A673 (cell line): ENCODE measurements at regions of chr16 and their contacts with region 1.

Region 1: GRCh38 chr16:1054660-1055556 is 17.6 kb upstream of the SSTR5 start:
- DNase-seq: peak; percentile 50
- H3K4me3 ChIP-seq: no peak overlapping the region
- H3K27ac ChIP-seq: no peak overlapping the region
- H3K4me1 ChIP-seq: no peaks in the 10 kb centered on the region
- H3K27me3 ChIP-seq: no peaks in the 10 kb centered on the region
- CTCF ChIP-seq: peak; percentile 90

Region 2: DNA sequence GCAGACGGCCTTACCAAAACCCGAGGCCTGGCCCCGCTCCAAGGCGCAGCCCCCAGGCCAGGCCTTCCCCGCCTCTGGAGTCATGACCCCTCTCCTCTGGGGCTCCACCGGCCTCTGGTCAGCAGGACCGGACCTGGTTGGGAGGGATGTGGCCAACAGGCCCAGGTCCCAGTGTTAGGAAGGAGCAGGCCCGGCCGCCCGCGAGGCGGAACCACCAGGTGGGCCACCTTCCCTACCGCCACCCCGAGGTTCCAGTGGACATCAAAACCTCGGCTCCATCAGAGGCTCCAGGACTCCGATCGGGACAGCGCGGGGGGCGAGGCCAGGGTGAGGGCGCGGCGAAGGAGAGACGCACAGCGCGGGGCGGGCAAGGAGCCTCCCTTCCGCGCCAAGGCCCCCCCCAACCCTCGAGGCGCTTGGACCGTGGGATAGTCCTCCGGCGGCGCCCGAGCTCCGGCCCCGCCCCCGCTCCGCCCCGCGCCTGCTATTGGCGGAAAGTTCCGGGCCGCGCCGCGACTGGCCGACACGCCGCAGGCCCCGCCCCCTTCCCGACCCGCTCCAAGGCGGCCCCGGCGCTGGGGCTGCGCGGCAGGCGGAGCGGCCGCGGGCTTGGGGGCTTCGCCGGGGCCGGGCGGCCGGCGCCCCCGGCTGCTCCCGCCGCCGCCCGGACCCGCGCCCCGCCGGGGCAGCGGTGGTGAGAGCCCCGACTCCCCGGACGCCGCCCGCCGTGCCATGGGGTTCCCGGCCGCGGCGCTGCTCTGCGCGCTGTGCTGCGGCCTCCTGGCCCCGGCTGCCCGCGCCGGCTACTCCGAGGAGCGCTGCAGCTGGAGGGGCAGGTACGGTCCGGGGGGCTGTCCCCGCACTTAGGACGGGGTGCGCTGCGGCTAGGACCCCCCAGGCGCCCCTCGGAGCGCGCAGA is 340.1 kb before region 1 on chr16 and contains the start of gene METRN:
- CTCF ChIA-PET with region 1: no interaction called
- POLR2A ChIA-PET with region 1: no interaction called
- intact Hi-C with region 1: loop called (anchors 10 kb)
- DNase-seq: peak; percentile 92
- H3K4me3 ChIP-seq: peak within 1 kb of the TSS; percentile 32
- H3K27ac ChIP-seq: no peak within 1 kb of the TSS
- H3K4me1 ChIP-seq: peaks cover 2% of the 10 kb centered on the region
- H3K27me3 ChIP-seq: peaks cover 32% of the 10 kb centered on the region
- CTCF ChIP-seq: no peak
- total RNA-seq, gene METRN: 0.86 and 1.8 TPM in 2 replicates

Region 3: DNA sequence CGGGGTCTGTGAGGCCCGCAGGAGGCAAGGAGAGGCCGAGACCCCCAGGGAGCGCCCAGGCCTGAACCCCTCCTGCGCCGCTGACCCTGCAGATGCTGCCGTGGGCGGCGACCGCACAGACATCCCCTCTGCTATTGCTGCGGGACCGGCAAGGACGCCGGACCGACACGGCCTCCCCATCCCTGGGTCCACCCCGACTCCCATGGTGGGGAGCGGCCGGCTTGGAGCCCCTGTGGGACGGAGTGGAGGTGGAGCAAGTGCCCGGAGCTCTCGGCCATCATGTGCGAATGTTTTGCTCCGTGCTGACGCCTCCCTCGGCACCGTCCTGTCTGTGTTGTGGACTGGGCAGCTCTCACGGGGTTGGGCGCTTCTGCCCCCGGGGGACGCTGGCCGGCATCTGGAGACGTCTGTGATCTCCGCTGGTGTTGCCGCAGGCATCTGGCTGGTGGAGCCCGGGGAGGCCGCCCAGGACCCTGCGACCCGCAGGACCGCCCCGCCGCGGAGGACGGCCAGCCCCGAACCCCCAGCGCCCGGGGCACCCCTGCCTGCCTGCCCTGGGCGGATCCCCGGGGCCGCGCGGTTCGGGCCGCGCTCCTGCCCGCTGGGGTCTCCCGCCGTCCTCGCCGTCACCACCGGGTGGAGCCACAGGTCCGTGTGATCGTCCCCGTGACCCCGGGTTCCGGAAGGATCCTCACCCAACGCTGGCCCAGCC is 241.5 kb before region 1 on chr16:
- CTCF ChIA-PET with region 1: interaction called, 5 read pairs
- POLR2A ChIA-PET with region 1: no interaction called
- intact Hi-C with region 1: loop called (anchors 2 kb)
- DNase-seq: peak; percentile 49
- H3K4me3 ChIP-seq: peak overlapping the region; percentile 10
- H3K27ac ChIP-seq: no peak overlapping the region
- H3K4me1 ChIP-seq: no peaks in the 10 kb centered on the region
- H3K27me3 ChIP-seq: no peaks in the 10 kb centered on the region
- CTCF ChIP-seq: peak; percentile 72

Region 4: GRCh38 chr16:964356-965042 is 90.4 kb before region 1 on chr16:
- CTCF ChIA-PET with region 1: interaction called, 11 read pairs
- POLR2A ChIA-PET with region 1: no interaction called
- intact Hi-C with region 1: no loop called
- DNase-seq: no peak
- H3K4me3 ChIP-seq: no peak overlapping the region
- H3K27ac ChIP-seq: no peak overlapping the region
- H3K4me1 ChIP-seq: peaks cover 6% of the 10 kb centered on the region
- H3K27me3 ChIP-seq: no peaks in the 10 kb centered on the region
- CTCF ChIP-seq: no peak

Region 5: DNA sequence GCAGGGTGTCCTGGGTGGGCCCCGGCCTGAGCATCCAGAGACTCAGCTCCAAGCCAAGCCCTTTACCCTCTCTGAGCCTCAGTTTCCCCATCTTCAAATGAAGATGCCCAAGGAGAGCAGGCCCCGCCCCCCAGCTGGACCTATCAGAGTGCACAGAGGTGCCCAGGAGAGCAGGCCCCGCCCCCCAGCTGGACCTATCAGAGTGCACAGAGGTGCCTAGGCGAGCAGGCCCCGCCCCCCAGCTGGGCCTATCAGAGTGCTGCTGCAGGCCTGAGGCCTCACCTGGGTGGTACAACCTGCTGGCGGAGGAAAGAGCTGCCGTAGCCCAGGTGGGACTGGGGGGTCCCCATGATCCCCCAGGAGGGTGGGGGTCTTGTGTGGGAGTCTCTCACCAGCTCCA is 14.2 kb after region 1 on chr16:
- CTCF ChIA-PET with region 1: interaction called, 11 read pairs
- POLR2A ChIA-PET with region 1: no interaction called
- intact Hi-C with region 1: no loop called
- DNase-seq: no peak
- H3K4me3 ChIP-seq: no peak overlapping the region
- H3K27ac ChIP-seq: no peak overlapping the region
- H3K4me1 ChIP-seq: no peaks in the 10 kb centered on the region
- H3K27me3 ChIP-seq: peaks cover 96% of the 10 kb centered on the region
- CTCF ChIP-seq: no peak

Region 6: DNA sequence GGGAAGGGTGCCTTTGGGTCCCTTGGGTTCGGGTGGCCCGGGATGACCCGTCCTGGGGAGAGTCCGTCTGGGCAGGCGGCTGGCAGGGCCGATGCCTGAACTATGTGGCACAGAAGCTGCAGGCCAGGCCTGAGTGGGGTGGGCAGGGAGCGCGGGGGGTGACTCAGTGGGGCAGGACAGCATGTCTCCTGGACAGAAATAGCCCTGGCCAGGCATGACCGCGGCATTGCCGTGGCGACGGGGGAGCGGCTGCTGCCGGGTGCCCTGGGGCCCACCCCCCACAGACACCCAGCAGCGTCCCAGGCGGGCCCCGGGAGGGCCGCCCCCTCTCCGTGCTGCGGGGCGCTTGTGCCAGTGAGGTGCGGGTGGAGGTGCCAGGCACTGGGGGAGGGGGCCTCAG is 42.9 kb after region 1 on chr16:
- CTCF ChIA-PET with region 1: interaction called, 3 read pairs
- POLR2A ChIA-PET with region 1: no interaction called
- intact Hi-C with region 1: loop called (anchors 5 kb)
- DNase-seq: no peak
- H3K4me3 ChIP-seq: no peak overlapping the region
- H3K27ac ChIP-seq: no peak overlapping the region
- H3K4me1 ChIP-seq: no peaks in the 10 kb centered on the region
- H3K27me3 ChIP-seq: no peaks in the 10 kb centered on the region
- CTCF ChIP-seq: no peak

Region 7: DNA sequence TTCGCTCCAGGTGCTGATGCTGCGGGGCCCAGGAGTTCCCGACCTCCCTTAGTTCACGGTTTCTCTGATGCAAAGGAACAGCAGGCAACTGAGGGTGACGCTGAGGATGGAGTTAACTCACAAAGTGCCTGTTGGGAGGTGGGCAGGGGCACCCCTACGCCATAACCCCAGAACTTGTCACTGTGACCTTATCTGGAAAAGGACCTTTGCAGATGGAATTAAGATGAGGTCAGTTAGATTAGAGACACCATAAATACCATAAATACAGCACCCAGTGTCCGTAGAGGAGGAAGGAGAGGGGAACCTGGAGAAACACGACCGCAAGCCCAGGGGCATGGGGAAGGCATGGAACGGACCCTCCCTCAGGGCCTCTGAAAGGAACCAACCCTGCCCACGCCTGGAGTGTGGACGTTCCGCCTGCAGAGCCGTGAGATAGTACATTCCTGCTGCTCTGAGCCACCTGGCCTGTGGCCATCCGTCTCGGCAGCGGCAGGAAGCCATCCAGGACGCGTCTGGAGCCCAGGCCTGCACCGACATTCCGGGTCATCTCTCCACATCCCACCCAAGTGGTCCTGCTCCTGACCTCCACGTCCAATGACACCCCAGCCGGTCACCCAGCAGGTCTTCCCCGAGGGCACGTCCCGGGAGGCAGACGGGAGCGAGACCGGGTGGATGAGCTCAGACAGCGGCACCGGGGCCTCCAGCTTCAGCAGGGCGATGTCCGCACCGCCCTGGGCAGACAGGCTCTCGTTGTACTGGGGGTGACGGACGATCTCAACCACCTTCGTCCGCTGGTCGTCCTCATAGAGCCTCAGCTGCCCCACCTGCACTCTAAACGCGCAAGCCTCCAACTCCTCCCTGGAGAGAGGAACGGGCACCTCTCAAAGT is 233.0 kb after region 1 on chr16:
- CTCF ChIA-PET with region 1: no interaction called
- POLR2A ChIA-PET with region 1: no interaction called
- intact Hi-C with region 1: no loop called
- DNase-seq: no peak
- H3K4me3 ChIP-seq: no peak overlapping the region
- H3K27ac ChIP-seq: no peak overlapping the region
- H3K4me1 ChIP-seq: peaks cover 11% of the 10 kb centered on the region
- H3K27me3 ChIP-seq: no peaks in the 10 kb centered on the region
- CTCF ChIP-seq: no peak